SK-MEL-5 (cell line): ENCODE measurements at regions of chr12 and their contacts with region 1.

Region 1: GRCh38 chr12:109775172-109775881 is 57.9 kb downstream of the TRPV4 start:
- DNase-seq: peak; percentile 78

Region 2: GRCh38 chr12:109504068-109504467 is 271.3 kb before region 1 on chr12:
- in situ Hi-C with region 1: no loop called
- DNase-seq: no peak

Region 3: GRCh38 chr12:109523071-109523470 is 252.3 kb before region 1 on chr12:
- in situ Hi-C with region 1: loop called (anchors 10 kb)
- DNase-seq: no peak

Region 4: DNA sequence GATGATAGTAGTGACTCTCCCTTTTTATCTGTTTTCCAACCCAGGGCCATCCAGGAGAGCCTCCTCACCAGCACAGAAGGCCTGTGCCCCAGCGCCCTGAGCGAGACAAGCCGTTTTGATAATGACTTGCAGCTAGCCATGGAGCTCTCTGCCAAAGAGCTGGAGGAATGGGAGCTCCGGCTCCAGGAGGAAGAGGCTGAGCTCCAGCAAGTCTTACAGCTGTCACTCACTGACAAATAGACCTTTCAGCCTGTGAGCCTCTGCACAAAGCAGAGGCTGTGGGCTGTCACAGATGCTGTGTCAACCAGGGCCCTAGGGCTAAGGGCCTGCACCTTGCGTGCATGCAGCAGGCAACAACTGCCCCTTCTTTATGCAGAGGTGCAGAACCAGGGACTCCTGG is 262.0 kb after region 1 on chr12:
- in situ Hi-C with region 1: no loop called
- DNase-seq: no peak